ENCODE measurements at regions of chr5 and their contacts with region 1.

Region 1: GRCh38 chr5:173615884-173616576 is 420 bp downstream of the BOD1 start:
- DNase-seq: peak; percentile 63
- ATAC-seq: peak; percentile 47
- H3K4me3 Mint-ChIP-seq: peak overlapping the region; percentile 92
- H3K27ac Mint-ChIP-seq: peak overlapping the region; percentile 88
- H3K4me1 Mint-ChIP-seq: peaks cover 41% of the 10 kb centered on the region
- H3K27me3 Mint-ChIP-seq: no peaks in the 10 kb centered on the region
- CTCF ChIP-seq: no peak

Region 2: DNA sequence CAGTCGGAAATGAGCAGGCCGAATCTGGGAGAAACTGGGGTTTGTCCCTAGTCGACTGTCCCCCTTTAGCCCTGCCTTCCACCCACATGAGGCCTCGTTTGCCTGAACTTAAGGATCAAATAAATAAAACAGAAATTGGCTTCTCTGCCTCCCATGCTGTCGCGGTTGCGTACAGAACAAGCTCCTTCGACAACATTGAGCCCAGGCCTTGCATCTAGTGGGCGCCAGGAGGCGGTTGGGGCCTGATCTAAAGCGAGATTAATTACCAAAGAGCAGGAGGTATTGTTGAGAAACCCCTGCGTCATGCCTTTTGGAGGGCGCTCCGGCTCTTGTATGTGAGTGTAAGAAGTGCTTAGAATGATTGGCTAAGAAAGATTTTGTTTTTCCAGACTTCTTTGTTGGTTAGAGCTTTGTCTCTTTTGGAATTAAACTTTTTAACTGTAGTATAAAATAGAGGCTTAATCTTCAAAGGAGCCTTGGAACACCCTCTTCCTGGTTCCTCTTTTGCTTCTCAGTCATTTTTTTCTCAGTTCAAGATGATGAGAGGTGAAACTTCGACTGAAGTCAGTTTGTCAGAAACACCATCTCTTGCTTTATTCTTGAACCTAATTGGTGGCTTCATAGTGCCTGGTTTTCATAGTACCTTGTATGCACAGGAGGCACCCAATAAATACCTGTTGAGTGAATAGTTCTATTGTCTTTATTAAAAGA is 631.6 kb before region 1 on chr5:
- CTCF ChIA-PET with region 1: no interaction called
- POLR2A ChIA-PET with region 1: no interaction called
- intact Hi-C with region 1: loop called (anchors 1 kb)
- DNase-seq: peak; percentile 48
- ATAC-seq: peak; percentile 67
- H3K4me3 Mint-ChIP-seq: peak overlapping the region; percentile 98
- H3K27ac Mint-ChIP-seq: peak overlapping the region; percentile 96
- H3K4me1 Mint-ChIP-seq: peaks cover 44% of the 10 kb centered on the region
- H3K27me3 Mint-ChIP-seq: no peaks in the 10 kb centered on the region
- CTCF ChIP-seq: no peak

Region 3: DNA sequence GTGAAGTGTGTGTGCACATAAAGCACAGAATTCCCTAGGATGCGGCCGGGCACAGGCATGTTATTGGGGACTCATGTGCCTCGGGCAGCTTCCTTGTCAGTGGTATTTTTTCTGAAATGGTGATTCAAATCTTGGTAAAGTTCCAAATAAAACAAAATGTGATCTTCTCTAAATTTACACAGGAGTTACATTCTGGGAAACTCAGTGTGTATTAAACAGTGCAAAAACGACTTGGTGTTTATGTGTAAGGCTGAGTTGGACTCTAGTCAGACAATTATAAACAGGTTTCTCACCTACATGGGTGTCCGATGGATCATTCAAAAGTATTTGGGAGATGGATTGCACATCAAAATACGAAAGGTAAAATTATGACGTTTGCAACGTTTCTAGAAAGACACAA is 48.5 kb before region 1 on chr5:
- CTCF ChIA-PET with region 1: no interaction called
- POLR2A ChIA-PET with region 1: no interaction called
- intact Hi-C with region 1: no loop called
- DNase-seq: no peak
- ATAC-seq: no peak
- H3K4me3 Mint-ChIP-seq: no peak overlapping the region
- H3K27ac Mint-ChIP-seq: no peak overlapping the region
- H3K4me1 Mint-ChIP-seq: peaks cover 1% of the 10 kb centered on the region
- H3K27me3 Mint-ChIP-seq: peaks cover 36% of the 10 kb centered on the region
- CTCF ChIP-seq: no peak

Region 4: DNA sequence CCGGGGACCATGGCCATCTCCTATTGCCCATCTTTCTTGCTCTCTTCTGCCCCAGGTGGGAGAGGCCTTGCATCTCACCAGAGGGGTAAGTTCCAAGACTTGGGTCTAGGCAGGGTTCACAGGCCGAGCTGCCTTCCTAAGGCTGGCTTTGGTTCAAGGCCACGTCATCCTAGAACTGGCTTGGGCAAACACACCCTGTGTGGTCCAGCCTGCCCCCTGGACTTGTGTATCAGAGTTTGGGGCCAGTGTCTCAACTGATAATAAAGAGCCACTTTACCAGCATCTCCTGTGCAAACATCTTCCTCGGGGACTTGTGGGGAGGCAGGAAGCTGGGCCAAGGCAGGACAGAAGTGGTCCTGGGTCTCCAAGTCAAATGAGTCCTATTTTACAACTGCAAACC is 17.3 kb before region 1 on chr5:
- CTCF ChIA-PET with region 1: no interaction called
- POLR2A ChIA-PET with region 1: no interaction called
- intact Hi-C with region 1: no loop called
- DNase-seq: no peak
- ATAC-seq: no peak
- H3K4me3 Mint-ChIP-seq: no peak overlapping the region
- H3K27ac Mint-ChIP-seq: no peak overlapping the region
- H3K4me1 Mint-ChIP-seq: no peaks in the 10 kb centered on the region
- H3K27me3 Mint-ChIP-seq: no peaks in the 10 kb centered on the region
- CTCF ChIP-seq: no peak

Region 5: DNA sequence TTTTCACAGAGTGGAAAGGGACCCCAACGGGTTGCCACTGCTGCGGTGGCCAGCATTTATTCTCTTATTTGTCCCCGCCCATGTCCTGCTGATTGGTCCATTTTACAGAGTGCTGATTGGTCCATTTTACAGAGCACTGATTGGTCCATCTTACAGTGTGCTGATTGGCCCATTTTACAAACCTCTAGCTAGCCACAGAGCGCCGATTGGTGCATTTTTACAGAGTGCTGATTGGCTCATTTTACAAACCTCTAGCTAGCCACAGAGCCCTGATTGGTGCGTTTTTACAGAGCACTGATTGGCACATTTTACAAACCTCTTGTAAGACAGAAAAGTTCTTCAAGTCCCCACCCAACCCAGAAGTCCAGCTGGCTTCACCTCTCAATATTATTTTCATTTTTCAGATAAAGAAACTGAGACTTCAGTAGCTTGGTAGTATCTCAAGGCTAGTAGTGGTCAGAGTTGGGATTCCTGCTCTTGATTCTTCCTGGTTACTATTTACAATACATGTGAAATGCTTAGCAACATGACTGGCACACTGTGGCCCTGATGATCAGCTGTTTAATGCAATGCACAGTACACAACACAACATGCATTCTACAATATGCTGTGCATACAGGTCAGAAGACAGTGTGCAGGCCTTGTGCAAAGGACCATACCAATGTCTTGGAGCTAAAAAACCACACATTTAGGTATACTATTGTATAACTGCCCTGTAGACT is 64.0 kb after region 1 on chr5:
- CTCF ChIA-PET with region 1: no interaction called
- POLR2A ChIA-PET with region 1: no interaction called
- intact Hi-C with region 1: loop called (anchors 2 kb)
- DNase-seq: no peak
- ATAC-seq: peak; percentile 54
- H3K4me3 Mint-ChIP-seq: peak overlapping the region; percentile 44
- H3K27ac Mint-ChIP-seq: peak overlapping the region; percentile 86
- H3K4me1 Mint-ChIP-seq: peaks cover 47% of the 10 kb centered on the region
- H3K27me3 Mint-ChIP-seq: no peaks in the 10 kb centered on the region
- CTCF ChIP-seq: no peak

Region 6: DNA sequence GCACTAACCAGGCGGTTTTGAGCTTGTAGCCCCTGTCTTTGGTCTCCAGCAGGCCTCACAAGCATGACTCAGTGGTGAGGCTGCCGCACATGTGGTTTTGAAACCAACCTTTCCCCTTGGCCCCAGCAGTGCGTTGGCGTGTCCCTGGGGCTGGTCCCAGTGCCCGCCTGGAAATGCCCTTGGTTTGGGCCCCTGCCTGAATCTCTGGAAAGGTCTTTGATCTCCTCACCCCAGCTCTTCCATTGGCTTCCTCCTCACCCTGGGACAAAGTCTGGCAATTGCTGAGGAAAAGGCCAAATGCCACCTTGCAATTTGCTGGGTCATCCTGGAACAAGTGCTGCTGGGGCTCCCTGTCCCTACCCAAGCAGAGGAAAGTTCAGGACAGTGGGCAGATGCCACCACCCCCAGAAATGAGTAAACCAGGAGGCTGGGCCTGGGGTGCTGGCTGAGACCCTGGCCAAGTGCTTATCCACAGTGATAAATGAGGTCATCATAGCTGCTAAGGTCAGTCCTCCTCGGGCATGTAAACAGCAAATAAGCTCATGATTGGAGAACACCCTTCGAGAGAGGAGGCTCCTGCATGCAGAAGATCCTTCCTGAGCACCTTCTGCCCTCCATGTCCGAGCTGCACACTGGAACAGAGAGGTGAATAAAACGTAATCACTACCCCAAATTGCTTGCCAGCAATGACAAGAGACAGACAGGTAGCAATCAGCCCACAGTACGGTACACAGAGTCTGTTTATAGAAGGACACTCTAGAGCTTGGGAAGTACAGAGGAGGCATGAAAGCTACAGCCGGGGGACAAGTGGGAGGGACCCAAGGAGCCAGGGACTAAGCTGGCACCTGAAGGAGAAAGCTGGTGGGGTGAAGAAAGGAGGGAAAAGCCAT is 173.2 kb after region 1 on chr5:
- CTCF ChIA-PET with region 1: interaction called, 5 read pairs
- POLR2A ChIA-PET with region 1: interaction called, 3 read pairs
- intact Hi-C with region 1: loop called (anchors 1 kb)
- DNase-seq: no peak
- ATAC-seq: no peak
- H3K4me3 Mint-ChIP-seq: no peak overlapping the region
- H3K27ac Mint-ChIP-seq: no peak overlapping the region
- H3K4me1 Mint-ChIP-seq: peaks cover 34% of the 10 kb centered on the region
- H3K27me3 Mint-ChIP-seq: no peaks in the 10 kb centered on the region
- CTCF ChIP-seq: no peak

Region 7: DNA sequence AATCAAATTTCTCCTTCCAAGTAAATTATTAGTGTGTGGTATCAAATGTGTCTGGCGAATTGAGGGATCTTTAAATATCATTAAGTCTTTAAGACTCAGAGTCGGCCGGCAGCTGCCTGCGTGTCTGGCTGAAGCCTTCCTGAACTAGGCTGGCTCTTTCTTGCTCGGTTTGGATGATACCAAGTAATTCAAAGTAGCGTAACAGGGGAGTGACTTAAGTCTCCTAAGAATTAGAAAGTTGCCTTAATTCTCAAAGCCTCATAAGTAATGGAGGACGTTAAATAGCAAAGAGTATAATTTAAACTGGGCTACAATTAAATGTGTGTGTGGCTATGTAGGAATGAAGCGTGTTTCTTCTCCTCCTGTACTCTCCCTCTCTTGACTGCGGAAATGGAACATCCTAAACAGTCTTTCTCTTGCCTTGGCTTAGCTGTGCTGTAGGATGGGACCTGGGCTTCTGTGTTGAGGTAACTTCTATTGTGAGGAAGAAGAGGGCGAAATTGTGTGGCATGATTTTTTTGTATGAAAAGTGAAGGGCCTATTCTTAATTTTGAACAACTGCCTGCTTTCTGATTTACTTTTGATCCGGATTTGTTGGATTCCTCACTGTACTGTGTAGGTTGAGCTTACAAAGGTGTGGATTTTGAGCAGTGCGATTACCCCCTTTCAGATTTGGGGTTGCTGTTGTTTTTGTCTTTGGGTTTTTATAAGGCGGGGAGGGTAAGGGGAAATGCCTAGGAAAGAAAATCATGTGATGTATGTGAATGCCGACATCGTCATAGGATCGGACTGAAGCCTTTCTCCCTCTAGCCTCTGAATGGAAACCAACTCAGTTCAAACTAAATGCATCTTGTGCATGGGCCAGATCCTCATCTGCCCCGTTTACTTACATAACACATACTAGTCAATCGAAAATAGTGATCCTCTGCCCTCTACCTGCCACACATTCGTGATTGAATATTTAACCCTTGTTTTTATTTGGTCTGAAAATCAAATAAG is 302.1 kb after region 1 on chr5:
- CTCF ChIA-PET with region 1: interaction called, 93 read pairs
- POLR2A ChIA-PET with region 1: interaction called, 17 read pairs
- intact Hi-C with region 1: loop called (anchors 1 kb)
- DNase-seq: no peak
- ATAC-seq: peak; percentile 92
- H3K4me3 Mint-ChIP-seq: no peak overlapping the region
- H3K27ac Mint-ChIP-seq: no peak overlapping the region
- H3K4me1 Mint-ChIP-seq: peaks cover 24% of the 10 kb centered on the region
- H3K27me3 Mint-ChIP-seq: no peaks in the 10 kb centered on the region
- CTCF ChIP-seq: no peak

Region 8: DNA sequence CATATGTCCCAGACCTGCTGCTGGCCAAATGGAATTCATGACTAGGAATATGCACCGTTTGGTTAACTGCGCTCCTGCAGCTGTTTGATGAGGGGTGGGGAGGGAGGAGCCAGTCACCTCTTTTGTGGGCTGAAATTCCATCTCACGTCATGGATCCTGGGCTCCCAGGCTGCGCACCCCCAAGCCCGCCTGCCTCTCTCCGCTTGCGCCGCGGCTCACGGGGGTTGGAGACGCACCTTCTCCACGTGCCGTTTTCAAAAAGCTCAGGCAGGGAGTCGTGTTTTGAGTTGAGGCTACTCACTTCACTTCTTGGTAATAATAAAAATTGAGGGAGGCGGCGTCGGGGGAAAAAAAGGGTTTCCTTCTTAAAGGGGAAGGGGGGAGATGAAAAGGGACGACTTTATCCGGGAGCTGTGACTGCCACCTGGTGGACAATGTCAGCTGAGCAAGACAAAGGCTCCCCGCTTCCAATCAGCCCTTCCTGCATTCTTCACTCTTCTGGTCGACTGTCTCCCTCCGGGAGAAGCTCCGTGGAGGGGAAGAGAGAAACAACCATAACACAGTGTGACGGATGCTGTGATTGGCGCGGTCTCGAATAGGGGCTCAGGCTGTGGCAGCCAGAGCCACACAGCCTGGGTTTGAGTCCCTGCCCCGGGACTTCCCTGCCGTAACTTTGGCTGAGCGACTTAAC is 357.0 kb after region 1 on chr5:
- CTCF ChIA-PET with region 1: interaction called, 85 read pairs
- POLR2A ChIA-PET with region 1: interaction called, 6 read pairs
- intact Hi-C with region 1: loop called (anchors 1 kb)
- DNase-seq: peak; percentile 65
- ATAC-seq: peak; percentile 90
- H3K4me3 Mint-ChIP-seq: peak overlapping the region; percentile 78
- H3K27ac Mint-ChIP-seq: no peak overlapping the region
- H3K4me1 Mint-ChIP-seq: peaks cover 10% of the 10 kb centered on the region
- H3K27me3 Mint-ChIP-seq: peaks cover 25% of the 10 kb centered on the region
- CTCF ChIP-seq: peak; percentile 55

Measured in activated B cell treated with CpG ODN at 0.5 μM for 24 hours (primary cell).